WTC11 (cell line): ENCODE measurements at regions of chr14 and their contacts with region 1.

Region 1: GRCh38 chr14:66624299-66624937 is 116.5 kb downstream of the GPHN start:
- DNase-seq: peak; percentile 62
- ATAC-seq: peak; percentile 99
- H3K4me3 Mint-ChIP-seq: no peak overlapping the region
- H3K27ac Mint-ChIP-seq: no peak overlapping the region
- H3K4me1 Mint-ChIP-seq: peaks cover 20% of the 10 kb centered on the region; the same call in 1 of the 2 replicates
- H3K27me3 Mint-ChIP-seq: no peaks in the 10 kb centered on the region
- CTCF ChIP-seq: peak; percentile 39; the same call in 1 of the 2 replicates

Region 2: DNA sequence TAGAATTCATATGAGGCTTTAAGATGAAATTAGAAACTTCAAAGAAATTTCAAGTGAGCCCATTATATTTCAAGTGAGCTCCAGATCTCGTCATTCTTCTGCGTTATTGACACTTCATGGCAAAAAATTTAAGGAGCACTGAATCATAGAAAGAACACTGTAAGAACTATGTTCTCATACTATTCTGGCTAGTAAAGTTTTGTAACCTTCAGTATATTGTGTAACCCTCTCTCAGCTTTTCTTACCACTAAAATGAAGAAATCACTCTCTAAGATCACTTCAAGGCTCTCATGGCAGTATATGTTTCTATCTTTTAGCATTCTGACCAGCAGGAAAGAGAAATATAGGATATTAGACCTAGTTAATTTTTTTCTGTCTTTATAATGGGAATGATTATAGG is 110.2 kb before region 1 on chr14:
- CTCF ChIA-PET with region 1: no interaction called
- POLR2A ChIA-PET with region 1: no interaction called
- DNase-seq: no peak
- ATAC-seq: no peak
- H3K4me3 Mint-ChIP-seq: no peak overlapping the region
- H3K27ac Mint-ChIP-seq: no peak overlapping the region
- H3K4me1 Mint-ChIP-seq: peaks cover 10% of the 10 kb centered on the region
- H3K27me3 Mint-ChIP-seq: peaks cover 14% of the 10 kb centered on the region
- CTCF ChIP-seq: no peak

Region 3: GRCh38 chr14:66662374-66662773 is 38.0 kb after region 1 on chr14:
- CTCF ChIA-PET with region 1: interaction called, 16 read pairs
- POLR2A ChIA-PET with region 1: no interaction called
- DNase-seq: peak; percentile 21
- ATAC-seq: peak; percentile 83
- H3K4me3 Mint-ChIP-seq: no peak overlapping the region
- H3K27ac Mint-ChIP-seq: no peak overlapping the region
- H3K4me1 Mint-ChIP-seq: no peaks in the 10 kb centered on the region
- H3K27me3 Mint-ChIP-seq: no peaks in the 10 kb centered on the region; the same call in 1 of the 2 replicates
- CTCF ChIP-seq: 0 out of 2 replicates have a peak, but pooled peaks have one; percentile 27

Region 4: GRCh38 chr14:66746316-66747006 is 122.0 kb after region 1 on chr14:
- CTCF ChIA-PET with region 1: interaction called, 13 read pairs
- POLR2A ChIA-PET with region 1: no interaction called
- DNase-seq: no peak
- ATAC-seq: peak; percentile 51
- H3K4me3 Mint-ChIP-seq: no peak overlapping the region
- H3K27ac Mint-ChIP-seq: no peak overlapping the region
- H3K4me1 Mint-ChIP-seq: no peaks in the 10 kb centered on the region
- H3K27me3 Mint-ChIP-seq: no peaks in the 10 kb centered on the region
- CTCF ChIP-seq: peak; percentile 27